SK-N-SH (cell line): ENCODE measurements at regions of chr2 and their contacts with region 1.

Region 1: GRCh38 chr2:6896930-6897759 is 19.6 kb downstream of the RSAD2 start:
- DNase-seq: peak; percentile 52
- H3K4me3 ChIP-seq: no peak overlapping the region; a peak in 1 of 4 replicates
- H3K27ac ChIP-seq: no peak overlapping the region
- H3K4me1 ChIP-seq: no peaks in the 10 kb centered on the region; a peak in 1 of 4 replicates
- H3K27me3 ChIP-seq: no peaks in the 10 kb centered on the region
- CTCF ChIP-seq: peak; percentile 90
- EP300 ChIP-seq: no peak
- RAD21 ChIP-seq: peak; percentile 97

Region 2: DNA sequence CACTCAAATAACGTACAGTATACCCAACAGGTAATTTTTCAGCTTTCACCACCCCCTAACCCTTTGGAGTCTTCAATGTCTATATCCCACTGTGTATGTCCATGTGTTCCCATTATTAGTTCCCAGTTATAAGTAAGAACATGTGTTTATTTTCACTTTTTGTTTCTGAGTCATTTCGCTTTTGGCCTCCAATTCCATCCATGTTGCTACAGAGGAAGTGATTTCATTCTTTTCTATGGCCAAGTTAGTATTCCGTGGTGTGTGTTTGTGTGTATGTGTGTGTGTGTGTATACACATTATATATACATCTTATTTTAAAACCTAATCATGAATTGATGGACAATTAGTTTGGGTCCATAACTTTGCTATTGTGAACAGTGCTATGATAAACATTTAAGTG is 495.8 kb before region 1 on chr2:
- CTCF ChIA-PET with region 1: no interaction called
- POLR2A ChIA-PET with region 1: no interaction called
- DNase-seq: no peak
- H3K4me3 ChIP-seq: no peak overlapping the region
- H3K27ac ChIP-seq: no peak overlapping the region
- H3K4me1 ChIP-seq: no peaks in the 10 kb centered on the region
- H3K27me3 ChIP-seq: no peaks in the 10 kb centered on the region
- CTCF ChIP-seq: no peak
- EP300 ChIP-seq: no peak
- RAD21 ChIP-seq: no peak

Region 3: GRCh38 chr2:6865346-6866274 is 31.5 kb before region 1 on chr2 and contains the start of gene CMPK2:
- CTCF ChIA-PET with region 1: interaction called, 15 read pairs
- POLR2A ChIA-PET with region 1: no interaction called
- DNase-seq: peak; percentile 95
- H3K4me3 ChIP-seq: peak within 1 kb of the TSS; percentile 75 to 82
- H3K27ac ChIP-seq: no peak within 1 kb of the TSS
- H3K4me1 ChIP-seq: peaks cover 5 to 10% of the 10 kb centered on the region in 2 experiments; a peak in 2 of 4 replicates
- H3K27me3 ChIP-seq: no peaks in the 10 kb centered on the region
- CTCF ChIP-seq: peak; percentile 37
- EP300 ChIP-seq: peak in 1 of 2 experiments; percentile 12; a peak in 1 of 4 replicates
- RAD21 ChIP-seq: no peak
- polyA plus RNA-seq, gene CMPK2: 0.86 and 1.1 TPM in 2 replicates

Region 4: DNA sequence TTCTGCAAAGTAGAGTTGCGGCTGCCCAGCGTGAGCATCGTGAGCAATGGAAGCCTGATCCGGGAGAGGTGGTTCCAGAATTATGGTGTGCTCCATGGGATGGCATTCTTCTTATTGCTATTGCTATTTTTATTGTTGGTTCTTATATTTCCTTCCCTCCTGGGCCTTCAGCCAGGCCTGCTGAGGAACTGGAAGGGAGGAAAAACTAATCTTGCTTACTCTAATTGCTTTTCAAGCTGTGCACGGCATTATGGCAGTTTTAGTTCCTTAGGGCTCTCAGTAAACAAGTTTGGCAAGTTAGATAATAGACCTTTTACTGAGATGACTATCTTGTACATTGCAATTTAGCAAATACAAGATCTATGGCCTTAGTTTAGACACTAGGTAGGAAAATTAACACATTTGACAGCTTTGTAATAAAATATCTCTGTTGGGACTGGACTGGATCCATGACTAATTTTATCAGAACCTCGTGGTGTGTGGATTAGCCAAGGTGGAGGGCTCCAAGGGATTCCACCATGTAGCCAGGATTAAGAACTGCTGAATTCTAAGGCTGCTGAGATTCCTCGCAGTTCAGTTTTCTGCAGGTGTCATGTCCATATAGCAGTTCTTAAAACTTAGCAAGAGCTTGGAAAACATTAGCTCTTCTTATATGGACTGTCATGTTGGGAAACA is 13.6 kb before region 1 on chr2:
- CTCF ChIA-PET with region 1: interaction called, 73 read pairs
- POLR2A ChIA-PET with region 1: no interaction called
- DNase-seq: no peak
- H3K4me3 ChIP-seq: no peak overlapping the region
- H3K27ac ChIP-seq: no peak overlapping the region
- H3K4me1 ChIP-seq: no peaks in the 10 kb centered on the region; a peak in 1 of 4 replicates
- H3K27me3 ChIP-seq: no peaks in the 10 kb centered on the region
- CTCF ChIP-seq: no peak
- EP300 ChIP-seq: no peak
- RAD21 ChIP-seq: no peak

Region 5: DNA sequence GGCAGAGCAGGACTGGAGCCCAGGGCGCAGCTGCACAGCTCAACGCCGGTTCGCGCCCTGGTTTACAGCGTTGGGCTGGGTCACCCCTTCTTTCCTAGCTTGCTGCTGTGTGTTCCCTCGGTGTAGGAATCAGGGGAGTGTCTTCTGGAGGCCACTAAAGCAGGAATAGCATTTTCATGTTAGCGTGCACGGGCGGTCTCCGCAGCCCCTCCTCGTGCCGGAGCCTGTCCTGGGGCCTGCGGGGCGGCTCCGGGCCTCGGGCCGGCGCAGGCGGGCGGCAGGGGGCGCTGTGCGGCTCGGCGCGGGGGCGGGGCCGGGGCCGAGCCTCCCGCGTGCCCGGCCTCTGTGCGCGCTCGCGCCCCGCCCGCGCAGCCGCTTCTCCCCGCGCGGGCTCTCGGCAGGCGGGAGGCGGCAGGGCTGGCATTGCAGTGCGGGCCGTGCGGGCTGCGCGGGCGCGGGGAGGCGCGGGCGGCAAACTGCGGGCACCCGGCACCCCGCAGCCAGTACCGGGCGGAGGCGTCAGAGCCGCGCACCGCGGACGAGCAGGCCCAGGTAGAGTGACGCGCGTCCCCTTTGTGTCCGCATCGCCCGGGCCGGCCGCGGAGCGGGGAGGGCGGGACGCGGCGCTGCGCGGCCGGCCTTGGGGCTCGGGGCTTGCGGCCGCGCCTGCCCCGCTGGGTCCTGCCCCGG is 20.1 kb after region 1 on chr2 and contains the start of gene RNF144A:
- CTCF ChIA-PET with region 1: interaction called, 134 read pairs
- POLR2A ChIA-PET with region 1: no interaction called
- DNase-seq: peak; percentile 99
- H3K4me3 ChIP-seq: peak within 1 kb of the TSS; percentile 79 to 90
- H3K27ac ChIP-seq: peak within 1 kb of the TSS; percentile 57 to 89; a peak in 3 of 4 replicates
- H3K4me1 ChIP-seq: peaks cover 6 to 39% of the 10 kb centered on the region in 2 experiments; a peak in 2 of 4 replicates
- H3K27me3 ChIP-seq: no peaks in the 10 kb centered on the region
- CTCF ChIP-seq: peak; percentile 57
- EP300 ChIP-seq: no peak
- RAD21 ChIP-seq: no peak; the same call in 1 of the 2 replicates
- polyA plus RNA-seq, gene RNF144A: 15.6 and 17.3 TPM in 2 replicates

Region 6: GRCh38 chr2:7007846-7008741 is 110.9 kb after region 1 on chr2:
- CTCF ChIA-PET with region 1: interaction called, 53 read pairs
- POLR2A ChIA-PET with region 1: no interaction called
- DNase-seq: peak; percentile 84
- H3K4me3 ChIP-seq: no peak overlapping the region
- H3K27ac ChIP-seq: peak overlapping the region; percentile 99
- H3K4me1 ChIP-seq: peaks cover 34 to 78% of the 10 kb centered on the region in 2 experiments
- H3K27me3 ChIP-seq: no peaks in the 10 kb centered on the region
- CTCF ChIP-seq: peak; percentile 63
- EP300 ChIP-seq: peak; percentile 61 to 95
- RAD21 ChIP-seq: peak; percentile 67

Region 7: GRCh38 chr2:7023542-7023941 is 126.4 kb after region 1 on chr2:
- CTCF ChIA-PET with region 1: interaction called, 177 read pairs
- POLR2A ChIA-PET with region 1: no interaction called
- DNase-seq: no peak
- H3K4me3 ChIP-seq: no peak overlapping the region
- H3K27ac ChIP-seq: peak overlapping the region; percentile 35 to 39; a peak in 3 of 4 replicates
- H3K4me1 ChIP-seq: peaks cover 5 to 43% of the 10 kb centered on the region in 2 experiments; a peak in 3 of 4 replicates
- H3K27me3 ChIP-seq: no peaks in the 10 kb centered on the region
- CTCF ChIP-seq: no peak
- EP300 ChIP-seq: no peak
- RAD21 ChIP-seq: no peak